A673 (cell line): ENCODE measurements at regions of chr10 and their contacts with region 1.

Region 1: DNA sequence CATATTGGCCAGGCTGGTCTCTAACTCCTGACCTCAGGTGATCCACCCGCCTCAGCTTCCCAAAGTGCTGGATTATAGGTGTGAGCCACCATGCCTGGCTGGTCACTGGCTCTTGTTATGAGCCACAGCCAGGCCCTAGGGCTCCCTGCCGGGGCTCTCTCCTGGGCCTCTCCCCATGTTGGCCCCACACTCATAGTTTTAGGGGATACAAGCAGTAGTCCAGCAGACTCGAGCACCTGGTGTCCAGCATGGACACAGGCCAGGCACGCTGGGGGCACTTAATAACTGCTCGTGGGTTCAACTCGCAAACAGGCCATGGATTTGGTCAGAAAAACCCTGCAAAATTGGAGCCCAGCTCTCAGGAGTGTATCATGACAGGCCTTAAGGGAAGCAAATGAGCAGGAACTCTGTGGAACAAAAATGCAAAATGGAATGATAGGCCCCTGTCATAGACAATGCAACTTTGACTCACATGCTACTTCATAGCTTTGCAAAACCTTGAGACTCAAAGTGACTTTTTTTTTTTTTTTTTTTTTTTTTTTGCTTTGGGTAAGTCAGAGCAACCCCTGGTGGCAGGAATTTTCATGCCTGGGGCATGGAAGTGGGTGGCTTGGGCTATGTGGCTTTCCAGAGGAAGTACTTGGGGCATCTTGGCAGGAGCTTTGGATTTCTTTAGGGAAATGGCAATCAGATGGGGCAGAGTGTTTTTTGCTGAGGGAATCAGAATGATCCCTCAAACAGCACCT is 62.5 kb downstream of the TACC2 start:
- DNase-seq: peak; percentile 63
- H3K4me3 ChIP-seq: no peak overlapping the region
- H3K27ac ChIP-seq: no peak overlapping the region
- H3K4me1 ChIP-seq: no peaks in the 10 kb centered on the region
- H3K27me3 ChIP-seq: no peaks in the 10 kb centered on the region
- CTCF ChIP-seq: peak; percentile 66

Region 2: GRCh38 chr10:121216721-121217181 is 834.7 kb before region 1 on chr10:
- CTCF ChIA-PET with region 1: no interaction called
- POLR2A ChIA-PET with region 1: no interaction called
- intact Hi-C with region 1: no loop called
- DNase-seq: no peak
- H3K4me3 ChIP-seq: no peak overlapping the region
- H3K27ac ChIP-seq: no peak overlapping the region
- H3K4me1 ChIP-seq: no peaks in the 10 kb centered on the region
- H3K27me3 ChIP-seq: peaks cover 41% of the 10 kb centered on the region
- CTCF ChIP-seq: no peak

Region 3: DNA sequence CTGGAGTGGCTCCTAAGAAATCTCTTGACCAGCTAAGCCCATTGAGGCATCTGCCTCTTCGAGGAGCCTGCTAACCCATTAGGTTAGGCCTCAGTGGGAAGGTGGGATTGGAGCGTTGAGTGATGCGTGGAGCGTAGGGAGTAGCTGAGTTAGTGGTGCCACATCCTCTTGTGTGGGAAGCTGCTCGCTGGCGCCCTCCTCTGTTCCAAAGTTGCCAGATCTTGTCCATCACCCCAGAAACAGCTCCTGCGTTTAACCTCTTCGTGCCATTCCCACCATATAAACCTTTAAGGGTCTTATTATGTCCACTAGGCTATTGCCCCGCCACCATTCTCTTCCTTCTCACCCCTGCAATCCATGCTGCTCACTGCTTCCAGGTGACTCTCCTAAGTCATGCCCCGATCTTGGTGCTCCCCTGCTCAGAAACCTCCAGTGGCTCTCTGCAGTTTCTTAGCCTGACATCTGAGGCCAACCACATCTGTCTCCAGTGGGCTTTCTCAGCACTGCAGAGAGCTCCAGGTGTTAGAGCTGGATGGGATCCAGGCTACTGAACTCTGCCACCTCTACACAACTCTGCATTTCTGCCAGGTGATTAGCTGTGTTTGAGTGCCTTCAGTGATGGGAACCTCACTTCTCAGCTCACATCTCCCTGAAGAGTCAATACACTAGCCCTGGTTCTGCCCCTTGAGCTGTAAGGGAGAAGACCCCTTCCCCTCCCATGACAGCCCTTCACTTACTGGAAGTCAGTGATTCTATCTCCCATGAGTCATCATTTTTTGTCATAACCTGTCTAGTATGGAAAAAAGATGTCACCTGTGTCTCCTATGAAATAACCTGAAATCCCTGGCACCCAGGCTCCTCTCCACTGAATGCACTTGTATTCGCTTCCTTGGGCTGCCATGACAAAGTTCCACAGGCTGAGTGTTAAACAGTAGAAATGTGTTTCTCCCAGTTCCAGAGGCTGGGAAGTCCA is 388.2 kb before region 1 on chr10:
- CTCF ChIA-PET with region 1: no interaction called
- POLR2A ChIA-PET with region 1: no interaction called
- intact Hi-C with region 1: no loop called
- DNase-seq: peak; percentile 36
- H3K4me3 ChIP-seq: no peak overlapping the region
- H3K27ac ChIP-seq: no peak overlapping the region
- H3K4me1 ChIP-seq: peaks cover 4% of the 10 kb centered on the region
- H3K27me3 ChIP-seq: no peaks in the 10 kb centered on the region
- CTCF ChIP-seq: peak; percentile 59

Region 4: GRCh38 chr10:121696854-121697253 is 354.6 kb before region 1 on chr10:
- CTCF ChIA-PET with region 1: interaction called, 13 read pairs
- POLR2A ChIA-PET with region 1: no interaction called
- intact Hi-C with region 1: no loop called
- DNase-seq: peak; percentile 66
- H3K4me3 ChIP-seq: no peak overlapping the region
- H3K27ac ChIP-seq: no peak overlapping the region
- H3K4me1 ChIP-seq: no peaks in the 10 kb centered on the region
- H3K27me3 ChIP-seq: peaks cover 41% of the 10 kb centered on the region
- CTCF ChIP-seq: peak; percentile 66

Region 5: GRCh38 chr10:122013311-122013780 is 38.1 kb before region 1 on chr10:
- CTCF ChIA-PET with region 1: interaction called, 12 read pairs
- POLR2A ChIA-PET with region 1: no interaction called
- intact Hi-C with region 1: no loop called
- DNase-seq: no peak
- H3K4me3 ChIP-seq: no peak overlapping the region
- H3K27ac ChIP-seq: no peak overlapping the region
- H3K4me1 ChIP-seq: no peaks in the 10 kb centered on the region
- H3K27me3 ChIP-seq: peaks cover 3% of the 10 kb centered on the region
- CTCF ChIP-seq: no peak

Region 6: DNA sequence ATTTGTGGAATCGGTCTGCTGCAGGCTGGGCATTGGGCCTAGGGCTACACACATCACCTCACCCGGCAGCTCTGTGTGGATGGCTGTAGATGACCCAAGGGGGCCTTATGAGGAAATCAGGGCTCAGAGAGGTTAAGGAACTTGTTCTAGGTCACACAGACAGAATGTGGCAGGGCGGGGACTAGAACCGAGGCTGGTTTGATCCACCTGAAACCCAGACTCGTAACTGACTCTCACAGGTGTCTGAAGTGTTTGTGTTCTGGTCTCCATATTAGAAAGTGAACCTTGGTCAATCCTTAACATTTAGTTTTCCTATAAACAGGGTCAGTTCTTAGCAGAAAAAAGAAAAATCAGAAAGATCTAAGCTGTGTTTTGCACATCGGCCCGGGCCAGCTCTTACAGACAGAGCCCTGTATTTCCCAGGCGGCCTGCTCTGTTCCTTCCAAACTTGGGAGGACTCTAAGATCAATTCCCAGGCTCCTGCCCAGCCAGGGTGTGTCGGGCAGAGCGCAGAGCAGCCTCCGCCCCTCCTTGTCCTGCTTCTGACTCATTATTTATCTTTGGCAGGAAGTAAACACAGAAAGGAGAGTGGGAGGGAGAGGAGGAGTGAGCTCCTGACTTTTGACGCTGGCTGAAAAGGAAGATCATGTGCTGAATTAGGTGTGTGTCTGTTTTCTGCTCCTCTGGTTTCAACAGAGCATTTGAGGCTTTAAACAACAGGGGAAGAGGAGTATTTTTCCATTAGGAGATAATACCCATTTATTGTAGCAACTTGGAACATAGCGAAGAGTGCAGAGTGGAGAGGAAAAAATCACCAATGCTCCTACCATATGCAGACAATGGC is 11.6 kb after region 1 on chr10:
- CTCF ChIA-PET with region 1: interaction called, 12 read pairs
- POLR2A ChIA-PET with region 1: no interaction called
- intact Hi-C with region 1: no loop called
- DNase-seq: peak; percentile 49
- H3K4me3 ChIP-seq: no peak overlapping the region
- H3K27ac ChIP-seq: no peak overlapping the region
- H3K4me1 ChIP-seq: no peaks in the 10 kb centered on the region
- H3K27me3 ChIP-seq: no peaks in the 10 kb centered on the region
- CTCF ChIP-seq: no peak

Region 7: DNA sequence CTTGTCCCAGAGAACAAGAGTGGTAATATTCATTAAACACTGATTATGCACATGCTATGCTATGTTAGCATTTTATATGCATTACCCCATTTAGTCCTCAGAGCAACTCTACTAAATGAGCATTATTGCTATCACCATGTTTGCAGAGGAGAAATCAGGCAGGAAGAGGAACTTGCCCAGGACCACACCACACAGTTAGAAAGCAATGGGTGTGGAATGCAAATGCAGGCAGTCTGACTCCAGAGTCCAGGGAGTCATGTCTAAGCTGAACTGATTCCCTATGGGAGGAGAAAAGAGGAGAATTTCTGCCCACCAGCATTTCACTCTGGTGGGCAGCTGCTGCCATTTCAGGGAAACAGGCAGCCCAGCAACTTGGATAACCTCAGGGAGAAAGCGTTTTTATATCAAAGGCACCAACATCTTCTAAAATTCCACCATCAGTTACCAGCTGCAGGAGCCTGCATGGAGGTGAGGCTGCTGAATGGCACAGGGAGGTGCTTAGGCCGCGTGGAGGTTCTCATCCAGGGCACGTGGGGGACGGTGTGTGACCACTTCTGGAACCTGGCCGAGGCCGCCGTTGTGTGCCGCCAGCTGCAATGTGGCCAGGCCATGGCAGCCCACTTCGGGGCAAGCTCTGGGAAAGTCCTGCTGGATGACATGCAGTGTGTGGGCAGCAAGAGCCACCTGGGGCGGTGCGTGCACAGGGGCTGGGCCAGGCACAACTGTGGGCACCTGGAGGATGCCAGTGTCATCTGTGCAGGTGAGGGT is 716.4 kb after region 1 on chr10:
- CTCF ChIA-PET with region 1: no interaction called
- POLR2A ChIA-PET with region 1: no interaction called
- intact Hi-C with region 1: no loop called
- DNase-seq: no peak
- H3K4me3 ChIP-seq: no peak overlapping the region
- H3K27ac ChIP-seq: no peak overlapping the region
- H3K4me1 ChIP-seq: no peaks in the 10 kb centered on the region
- H3K27me3 ChIP-seq: peaks cover 21% of the 10 kb centered on the region
- CTCF ChIP-seq: no peak